CD8-positive, alpha-beta T cell (primary cell): ENCODE measurements at regions of chr19 and their contacts with region 1.

Region 1: GRCh38 chr19:16185123-16185767 is at the start of gene FAM32A:
- DNase-seq: peak; percentile 98 to 99 (median 98)
- ATAC-seq: peak; percentile 94
- H3K4me3 ChIP-seq: peak within 1 kb of the TSS; percentile 90 to 95
- H3K4me3 Mint-ChIP-seq: peak within 1 kb of the TSS; percentile 99
- H3K27ac ChIP-seq: peak within 1 kb of the TSS; percentile 81 to 87
- H3K27ac Mint-ChIP-seq: peak within 1 kb of the TSS; percentile 95
- H3K4me1 ChIP-seq: peaks cover 19% of the 10 kb centered on the region
- H3K4me1 Mint-ChIP-seq: peaks cover 38% of the 10 kb centered on the region
- H3K27me3 ChIP-seq: no peaks in the 10 kb centered on the region
- H3K27me3 Mint-ChIP-seq: peaks cover 4% of the 10 kb centered on the region
- CTCF ChIP-seq: no peak
- total RNA-seq, gene FAM32A: 59.7 to 60.4 TPM

Region 2: DNA sequence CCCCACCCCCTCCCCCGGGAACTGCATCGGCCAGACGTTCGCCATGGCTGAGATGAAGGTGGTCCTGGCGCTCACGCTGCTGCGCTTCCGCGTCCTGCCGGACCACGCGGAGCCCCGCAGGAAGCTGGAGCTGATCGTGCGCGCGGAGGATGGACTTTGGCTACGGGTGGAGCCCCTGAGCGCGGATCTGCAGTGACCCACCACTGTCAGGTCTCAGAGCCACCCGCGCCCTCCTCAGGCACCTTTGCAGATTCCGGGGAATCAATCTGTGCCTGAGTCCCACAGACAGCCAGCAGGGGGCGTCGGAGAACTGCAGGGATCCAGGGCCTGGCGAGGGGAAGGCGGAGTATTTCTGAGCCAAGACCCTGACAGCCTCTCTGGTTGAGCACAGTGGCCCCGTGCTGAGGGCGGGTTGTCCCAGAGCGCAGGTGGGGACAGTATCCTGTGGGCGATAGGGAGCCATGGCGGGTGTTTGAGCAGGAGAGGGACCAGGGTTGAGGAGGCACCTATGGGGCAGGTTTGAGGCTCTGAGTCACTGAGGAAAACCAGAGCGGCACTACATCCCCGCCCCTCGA is 600.6 kb before region 1 on chr19:
- CTCF ChIA-PET with region 1: no interaction called
- POLR2A ChIA-PET with region 1: no interaction called
- intact Hi-C with region 1: loop called in 1 of 2 experiments (anchors 1 kb)
- DNase-seq: peak; percentile 72 to 90 (median 82)
- ATAC-seq: peak; percentile 97
- H3K4me3 ChIP-seq: peak overlapping the region; percentile 12 to 48
- H3K4me3 Mint-ChIP-seq: peak overlapping the region; percentile 42
- H3K27ac ChIP-seq: no peak overlapping the region
- H3K27ac Mint-ChIP-seq: no peak overlapping the region
- H3K4me1 ChIP-seq: no peaks in the 10 kb centered on the region
- H3K4me1 Mint-ChIP-seq: no peaks in the 10 kb centered on the region
- H3K27me3 ChIP-seq: peaks cover 4 to 8% of the 10 kb centered on the region in 2 experiments
- H3K27me3 Mint-ChIP-seq: peaks cover 19% of the 10 kb centered on the region
- CTCF ChIP-seq: peak; percentile 77

Region 3: GRCh38 chr19:15836595-15837337 is 348.5 kb before region 1 on chr19:
- CTCF ChIA-PET with region 1: no interaction called
- POLR2A ChIA-PET with region 1: interaction called, 3 read pairs
- intact Hi-C with region 1: loop called (anchors 2 to 5 kb)
- DNase-seq: peak; percentile 90 to 99 (median 95)
- ATAC-seq: peak; percentile 87
- H3K4me3 ChIP-seq: peak overlapping the region; percentile 64 to 78
- H3K4me3 Mint-ChIP-seq: peak overlapping the region; percentile 91
- H3K27ac ChIP-seq: peak overlapping the region; percentile 96 to 97
- H3K27ac Mint-ChIP-seq: peak overlapping the region; percentile 98
- H3K4me1 ChIP-seq: peaks cover 22% of the 10 kb centered on the region
- H3K4me1 Mint-ChIP-seq: peaks cover 31% of the 10 kb centered on the region
- H3K27me3 ChIP-seq: no peaks in the 10 kb centered on the region
- H3K27me3 Mint-ChIP-seq: no peaks in the 10 kb centered on the region
- CTCF ChIP-seq: no peak

Region 4: DNA sequence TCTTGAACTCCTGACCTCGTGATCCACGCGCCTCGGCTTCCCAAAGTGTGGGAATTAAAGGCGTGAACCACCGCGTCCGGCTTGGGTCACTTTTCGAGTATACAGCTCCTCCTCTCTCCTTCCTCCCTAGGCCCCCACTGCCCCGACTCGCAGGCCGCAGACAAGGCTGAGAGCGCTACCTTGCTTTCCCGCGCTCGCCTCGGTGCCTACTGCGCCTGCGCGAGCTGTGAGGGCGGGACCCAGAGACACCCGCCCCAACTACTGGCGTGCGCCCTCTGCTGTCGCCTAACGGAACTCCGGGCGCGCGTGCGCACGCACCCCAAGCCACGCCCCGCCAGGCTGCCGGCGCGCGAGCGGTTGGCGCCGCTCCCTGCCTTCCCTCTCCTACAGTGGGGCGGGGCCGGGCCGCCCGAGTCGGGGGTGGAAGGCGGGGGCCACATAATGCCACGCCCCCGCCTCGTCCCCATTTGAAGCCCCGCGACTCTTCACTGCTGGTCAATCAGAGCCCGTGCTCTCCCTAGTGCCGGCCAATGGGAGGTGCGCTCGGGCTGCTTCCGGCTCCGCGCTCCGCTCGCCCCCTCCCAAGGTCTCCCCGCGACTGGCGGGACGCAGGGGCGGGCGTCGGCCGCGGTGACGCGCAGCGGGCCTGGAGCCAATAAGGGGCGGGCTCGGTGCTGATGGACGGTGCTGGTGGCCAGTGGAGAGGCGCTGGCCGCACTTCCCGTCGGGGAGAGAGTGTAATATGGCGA is 73.9 kb before region 1 on chr19 and contains the start of gene RAB8A:
- CTCF ChIA-PET with region 1: interaction called, 7 read pairs
- POLR2A ChIA-PET with region 1: interaction called, 4 read pairs
- intact Hi-C with region 1: loop called (anchors 1 kb)
- DNase-seq: peak; percentile 98 to 100 (median 99)
- ATAC-seq: peak; percentile 87
- H3K4me3 ChIP-seq: peak within 1 kb of the TSS; percentile 98 to 100
- H3K4me3 Mint-ChIP-seq: peak within 1 kb of the TSS; percentile 97
- H3K27ac ChIP-seq: peak within 1 kb of the TSS; percentile 93 to 98
- H3K27ac Mint-ChIP-seq: peak within 1 kb of the TSS; percentile 98
- H3K4me1 ChIP-seq: peaks cover 41% of the 10 kb centered on the region
- H3K4me1 Mint-ChIP-seq: peaks cover 39% of the 10 kb centered on the region
- H3K27me3 ChIP-seq: no peaks in the 10 kb centered on the region
- H3K27me3 Mint-ChIP-seq: no peaks in the 10 kb centered on the region
- CTCF ChIP-seq: peak; percentile 84
- total RNA-seq, gene RAB8A: 79.1 to 88.4 TPM

Region 5: GRCh38 chr19:16324384-16325160 is 139.3 kb after region 1 on chr19 and contains the start of gene KLF2:
- CTCF ChIA-PET with region 1: no interaction called
- POLR2A ChIA-PET with region 1: interaction called, 18 read pairs
- intact Hi-C with region 1: loop called (anchors 1 to 5 kb)
- DNase-seq: peak; percentile 92 to 98 (median 97)
- ATAC-seq: peak; percentile 58
- H3K4me3 ChIP-seq: peak within 1 kb of the TSS; percentile 87 to 100
- H3K4me3 Mint-ChIP-seq: peak within 1 kb of the TSS; percentile 77
- H3K27ac ChIP-seq: peak within 1 kb of the TSS; percentile 94 to 99
- H3K27ac Mint-ChIP-seq: peak within 1 kb of the TSS; percentile 82
- H3K4me1 ChIP-seq: peaks cover 36% of the 10 kb centered on the region
- H3K4me1 Mint-ChIP-seq: peaks cover 40% of the 10 kb centered on the region
- H3K27me3 ChIP-seq: no peaks in the 10 kb centered on the region
- H3K27me3 Mint-ChIP-seq: no peaks in the 10 kb centered on the region
- CTCF ChIP-seq: no peak
- total RNA-seq, gene KLF2: 817 to 847 TPM

Region 6: GRCh38 chr19:16355293-16356043 is 170.2 kb after region 1 on chr19:
- CTCF ChIA-PET with region 1: no interaction called
- POLR2A ChIA-PET with region 1: no interaction called
- intact Hi-C with region 1: no loop called
- DNase-seq: peak in 2 of 9 experiments; percentile 2 to 52
- ATAC-seq: peak; percentile 63
- H3K4me3 ChIP-seq: no peak overlapping the region
- H3K4me3 Mint-ChIP-seq: no peak overlapping the region
- H3K27ac ChIP-seq: no peak overlapping the region
- H3K27ac Mint-ChIP-seq: peak overlapping the region; percentile 62
- H3K4me1 ChIP-seq: peaks cover 56% of the 10 kb centered on the region
- H3K4me1 Mint-ChIP-seq: peaks cover 63% of the 10 kb centered on the region
- H3K27me3 ChIP-seq: no peaks in the 10 kb centered on the region
- H3K27me3 Mint-ChIP-seq: no peaks in the 10 kb centered on the region
- CTCF ChIP-seq: no peak

Region 7: GRCh38 chr19:16417660-16418596 is 232.7 kb after region 1 on chr19:
- CTCF ChIA-PET with region 1: interaction called, 9 read pairs
- POLR2A ChIA-PET with region 1: no interaction called
- intact Hi-C with region 1: loop called (anchors 1 kb)
- DNase-seq: peak; percentile 54 to 84 (median 70)
- ATAC-seq: peak; percentile 99
- H3K4me3 ChIP-seq: no peak overlapping the region
- H3K4me3 Mint-ChIP-seq: no peak overlapping the region
- H3K27ac ChIP-seq: no peak overlapping the region
- H3K27ac Mint-ChIP-seq: peak overlapping the region; percentile 32
- H3K4me1 ChIP-seq: peaks cover 6% of the 10 kb centered on the region
- H3K4me1 Mint-ChIP-seq: peaks cover 9% of the 10 kb centered on the region
- H3K27me3 ChIP-seq: no peaks in the 10 kb centered on the region
- H3K27me3 Mint-ChIP-seq: no peaks in the 10 kb centered on the region
- CTCF ChIP-seq: peak; percentile 74